Activated CD8-positive, alpha-beta T cell treated with anti-CD3 and anti-CD28 coated beads, Interleukin-2, amount 10 ng/mL, durations not matched to agents 7 days and 5 days (primary cell): ENCODE measurements at regions of chr17 and their contacts with region 1.

Region 1: GRCh38 chr17:3913531-3914311 is 2.5 kb downstream of the P2RX1 start:
- DNase-seq: peak; percentile 88
- ATAC-seq: peak; percentile 59
- H3K4me3 Mint-ChIP-seq: no peak overlapping the region
- H3K27ac Mint-ChIP-seq: peak overlapping the region; percentile 78
- H3K4me1 Mint-ChIP-seq: peaks cover 70% of the 10 kb centered on the region
- H3K27me3 Mint-ChIP-seq: no peaks in the 10 kb centered on the region

Region 2: GRCh38 chr17:3865176-3865575 is 48.5 kb before region 1 on chr17:
- CTCF ChIA-PET with region 1: interaction called, 19 read pairs
- POLR2A ChIA-PET with region 1: no interaction called
- DNase-seq: no peak
- ATAC-seq: no peak
- H3K4me3 Mint-ChIP-seq: no peak overlapping the region
- H3K27ac Mint-ChIP-seq: no peak overlapping the region
- H3K4me1 Mint-ChIP-seq: no peaks in the 10 kb centered on the region
- H3K27me3 Mint-ChIP-seq: no peaks in the 10 kb centered on the region

Region 3: GRCh38 chr17:3965118-3965803 is 51.5 kb after region 1 on chr17:
- CTCF ChIA-PET with region 1: interaction called, 21 read pairs
- POLR2A ChIA-PET with region 1: interaction called, 5 read pairs
- DNase-seq: peak; percentile 90
- ATAC-seq: peak; percentile 73
- H3K4me3 Mint-ChIP-seq: peak overlapping the region; percentile 86
- H3K27ac Mint-ChIP-seq: peak overlapping the region; percentile 94
- H3K4me1 Mint-ChIP-seq: peaks cover 42% of the 10 kb centered on the region
- H3K27me3 Mint-ChIP-seq: no peaks in the 10 kb centered on the region

Region 4: GRCh38 chr17:4017377-4017776 is 103.7 kb after region 1 on chr17:
- CTCF ChIA-PET with region 1: interaction called, 12 read pairs
- POLR2A ChIA-PET with region 1: no interaction called
- DNase-seq: no peak
- ATAC-seq: no peak
- H3K4me3 Mint-ChIP-seq: no peak overlapping the region
- H3K27ac Mint-ChIP-seq: no peak overlapping the region
- H3K4me1 Mint-ChIP-seq: peaks cover 2% of the 10 kb centered on the region
- H3K27me3 Mint-ChIP-seq: no peaks in the 10 kb centered on the region